PC-3 (cell line): ENCODE measurements at regions of chr10 and their contacts with region 1.

Region 1: GRCh38 chr10:73940634-73941221 is 29.8 kb downstream of the PLAU start:
- DNase-seq: peak; percentile 100
- ATAC-seq: peak; percentile 85
- H3K4me3 ChIP-seq: peak overlapping the region; percentile 38
- H3K27ac ChIP-seq: peak overlapping the region; percentile 74
- H3K4me1 ChIP-seq: peaks cover 31% of the 10 kb centered on the region
- H3K27me3 ChIP-seq: no peaks in the 10 kb centered on the region
- CTCF ChIP-seq: peak; percentile 100

Region 2: DNA sequence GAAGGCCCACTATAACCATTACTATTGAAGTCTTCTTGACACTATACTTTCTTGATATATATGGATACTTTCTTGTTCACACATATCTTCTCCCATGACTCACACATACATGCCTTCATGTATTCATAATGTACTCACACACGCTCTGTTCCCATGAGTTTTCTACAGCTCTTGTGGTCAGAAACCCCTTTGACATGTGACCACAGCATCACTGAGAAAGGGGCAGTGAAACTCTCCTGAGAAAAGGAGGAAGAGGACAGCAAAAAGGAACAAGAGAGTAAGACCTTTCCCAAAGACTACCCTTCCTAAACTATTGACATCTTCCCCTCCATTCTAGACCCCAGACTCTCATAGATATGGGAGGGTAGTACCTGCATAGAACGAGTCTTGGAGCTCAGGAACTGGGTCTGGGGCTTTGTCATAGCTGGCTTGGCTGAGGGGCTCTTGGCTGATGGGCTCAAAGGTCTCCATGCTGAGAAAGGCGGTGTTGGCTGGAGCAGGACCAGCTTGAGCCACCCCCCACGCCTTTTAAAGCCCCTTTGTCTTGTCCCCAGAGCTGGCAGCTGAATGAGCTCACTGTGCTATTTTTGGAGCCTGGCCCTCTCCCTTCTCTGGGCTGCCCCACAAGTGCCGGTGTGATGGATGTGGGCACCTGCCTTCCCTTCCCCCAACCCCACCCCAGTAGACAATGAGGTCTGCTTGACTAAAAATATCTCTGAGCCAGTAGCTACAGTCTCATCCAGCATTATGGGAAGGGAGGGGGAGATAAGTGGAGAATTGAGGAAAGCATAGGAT is 290.0 kb before region 1 on chr10:
- CTCF ChIA-PET with region 1: no interaction called
- POLR2A ChIA-PET with region 1: no interaction called
- intact Hi-C with region 1: loop called (anchors 10 kb)
- DNase-seq: peak; percentile 53
- ATAC-seq: no peak
- H3K4me3 ChIP-seq: no peak overlapping the region
- H3K27ac ChIP-seq: no peak overlapping the region
- H3K4me1 ChIP-seq: no peaks in the 10 kb centered on the region
- H3K27me3 ChIP-seq: no peaks in the 10 kb centered on the region
- CTCF ChIP-seq: no peak

Region 3: GRCh38 chr10:73803680-73804286 is 136.9 kb before region 1 on chr10:
- CTCF ChIA-PET with region 1: no interaction called
- POLR2A ChIA-PET with region 1: no interaction called
- intact Hi-C with region 1: no loop called
- DNase-seq: no peak
- ATAC-seq: no peak
- H3K4me3 ChIP-seq: no peak overlapping the region
- H3K27ac ChIP-seq: no peak overlapping the region
- H3K4me1 ChIP-seq: no peaks in the 10 kb centered on the region
- H3K27me3 ChIP-seq: no peaks in the 10 kb centered on the region
- CTCF ChIP-seq: no peak

Region 4: DNA sequence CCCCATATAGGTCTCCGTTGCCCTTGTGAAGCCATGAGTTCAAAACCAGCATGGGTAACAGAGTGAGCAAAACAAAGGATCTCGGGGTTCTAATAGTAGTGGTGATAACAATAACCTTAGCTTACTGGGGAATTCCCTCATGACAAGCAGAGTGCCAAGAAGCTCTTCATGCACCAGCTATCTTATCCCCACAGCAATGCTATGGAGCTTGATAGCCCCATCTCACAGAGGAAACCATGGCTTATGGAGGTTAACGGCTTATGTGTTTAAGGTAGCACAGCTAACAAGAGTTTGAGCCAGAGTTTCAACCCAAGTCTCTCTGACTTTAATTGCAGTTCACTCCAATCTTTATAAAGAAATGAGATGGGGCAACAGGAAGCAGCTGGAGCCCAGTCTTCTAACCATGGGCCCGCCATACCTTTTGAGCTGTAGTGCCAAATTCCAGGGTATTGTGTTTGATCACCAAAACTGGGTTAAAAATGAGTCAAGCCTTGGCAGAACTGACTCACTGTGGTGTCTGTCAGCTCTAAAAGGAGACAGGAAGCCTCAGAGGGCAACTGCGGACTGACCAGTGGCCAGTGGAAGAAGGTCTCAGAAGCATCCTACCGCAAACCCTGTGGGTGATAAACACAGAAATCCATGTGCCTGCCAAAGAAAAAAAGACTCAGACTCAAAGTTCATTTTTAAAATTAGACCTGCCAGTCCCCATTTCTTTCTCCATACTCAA is 46.3 kb before region 1 on chr10:
- CTCF ChIA-PET with region 1: interaction called, 317 read pairs
- POLR2A ChIA-PET with region 1: interaction called, 10 read pairs
- intact Hi-C with region 1: no loop called
- DNase-seq: peak; percentile 100
- ATAC-seq: peak; percentile 67
- H3K4me3 ChIP-seq: no peak overlapping the region
- H3K27ac ChIP-seq: peak overlapping the region; percentile 60
- H3K4me1 ChIP-seq: peaks cover 76% of the 10 kb centered on the region
- H3K27me3 ChIP-seq: no peaks in the 10 kb centered on the region
- CTCF ChIP-seq: no peak

Region 5: DNA sequence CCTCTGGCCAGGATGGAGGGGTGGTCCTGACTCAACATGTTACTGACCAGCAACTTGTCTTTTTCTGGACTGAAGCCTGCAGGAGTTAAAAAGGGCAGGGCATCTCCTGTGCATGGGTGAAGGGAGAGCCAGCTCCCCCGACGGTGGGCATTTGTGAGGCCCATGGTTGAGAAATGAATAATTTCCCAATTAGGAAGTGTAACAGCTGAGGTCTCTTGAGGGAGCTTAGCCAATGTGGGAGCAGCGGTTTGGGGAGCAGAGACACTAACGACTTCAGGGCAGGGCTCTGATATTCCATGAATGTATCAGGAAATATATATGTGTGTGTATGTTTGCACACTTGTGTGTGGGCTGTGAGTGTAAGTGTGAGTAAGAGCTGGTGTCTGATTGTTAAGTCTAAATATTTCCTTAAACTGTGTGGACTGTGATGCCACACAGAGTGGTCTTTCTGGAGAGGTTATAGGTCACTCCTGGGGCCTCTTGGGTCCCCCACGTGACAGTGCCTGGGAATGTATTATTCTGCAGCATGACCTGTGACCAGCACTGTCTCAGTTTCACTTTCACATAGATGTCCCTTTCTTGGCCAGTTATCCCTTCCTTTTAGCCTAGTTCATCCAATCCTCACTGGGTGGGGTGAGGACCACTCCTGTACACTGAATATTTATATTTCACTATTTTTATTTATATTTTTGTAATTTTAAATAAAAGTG is 23.8 kb before region 1 on chr10:
- CTCF ChIA-PET with region 1: interaction called, 10 read pairs
- POLR2A ChIA-PET with region 1: interaction called, 3 read pairs
- intact Hi-C with region 1: no loop called
- DNase-seq: peak; percentile 50
- ATAC-seq: peak; percentile 5
- H3K4me3 ChIP-seq: peak overlapping the region; percentile 0; the same call in 1 of the 2 replicates
- H3K27ac ChIP-seq: peak overlapping the region; percentile 7
- H3K4me1 ChIP-seq: peaks cover 58% of the 10 kb centered on the region
- H3K27me3 ChIP-seq: no peaks in the 10 kb centered on the region
- CTCF ChIP-seq: no peak

Region 6: GRCh38 chr10:74035303-74035702 is 94.6 kb after region 1 on chr10:
- CTCF ChIA-PET with region 1: interaction called, 13 read pairs
- POLR2A ChIA-PET with region 1: no interaction called
- intact Hi-C with region 1: loop called (anchors 1 kb)
- DNase-seq: peak; percentile 76
- ATAC-seq: peak; percentile 51
- H3K4me3 ChIP-seq: no peak overlapping the region
- H3K27ac ChIP-seq: no peak overlapping the region
- H3K4me1 ChIP-seq: no peaks in the 10 kb centered on the region
- H3K27me3 ChIP-seq: no peaks in the 10 kb centered on the region
- CTCF ChIP-seq: peak; percentile 98

Region 7: DNA sequence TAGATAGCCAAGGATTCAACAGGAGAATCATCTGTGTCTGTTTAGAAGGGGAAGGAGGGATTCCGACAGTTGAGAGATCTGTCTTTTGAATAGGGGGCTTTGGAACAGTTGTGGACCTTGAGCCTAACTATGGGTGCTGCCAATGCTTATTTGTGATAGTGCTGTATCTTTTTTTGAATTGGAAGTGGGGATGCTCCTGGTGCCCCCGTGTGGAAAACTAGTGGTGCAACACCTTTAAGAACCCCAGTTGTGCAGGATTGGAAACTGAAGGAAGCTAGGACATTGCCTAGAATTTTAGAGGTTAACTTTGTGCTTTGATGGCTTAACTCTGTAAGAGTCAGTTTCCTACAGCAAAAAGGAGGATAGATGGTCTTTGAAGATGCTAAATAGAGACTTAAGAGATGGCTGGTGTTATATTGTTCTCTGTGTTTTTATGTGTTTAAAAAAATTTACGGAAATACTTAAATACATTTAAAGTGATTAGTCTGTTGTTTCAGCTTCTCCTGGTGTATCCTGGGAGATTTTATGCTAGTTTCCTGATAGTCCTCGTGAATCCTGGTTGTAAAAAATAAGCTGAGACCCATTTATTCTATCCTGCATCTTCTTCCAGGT is 140.6 kb after region 1 on chr10:
- CTCF ChIA-PET with region 1: interaction called, 13 read pairs
- POLR2A ChIA-PET with region 1: interaction called, 3 read pairs
- intact Hi-C with region 1: loop called (anchors 1 kb)
- DNase-seq: peak; percentile 94
- ATAC-seq: peak; percentile 49
- H3K4me3 ChIP-seq: no peak overlapping the region
- H3K27ac ChIP-seq: no peak overlapping the region
- H3K4me1 ChIP-seq: peaks cover 43% of the 10 kb centered on the region
- H3K27me3 ChIP-seq: no peaks in the 10 kb centered on the region
- CTCF ChIP-seq: no peak

Region 8: GRCh38 chr10:74406006-74406405 is 465.3 kb after region 1 on chr10:
- CTCF ChIA-PET with region 1: no interaction called
- POLR2A ChIA-PET with region 1: no interaction called
- intact Hi-C with region 1: no loop called
- DNase-seq: no peak
- ATAC-seq: peak; percentile 22; the same call in 1 of the 2 replicates
- H3K4me3 ChIP-seq: no peak overlapping the region
- H3K27ac ChIP-seq: no peak overlapping the region
- H3K4me1 ChIP-seq: peaks cover 6% of the 10 kb centered on the region; the same call in 1 of the 2 replicates
- H3K27me3 ChIP-seq: no peaks in the 10 kb centered on the region
- CTCF ChIP-seq: no peak

Region 9: DNA sequence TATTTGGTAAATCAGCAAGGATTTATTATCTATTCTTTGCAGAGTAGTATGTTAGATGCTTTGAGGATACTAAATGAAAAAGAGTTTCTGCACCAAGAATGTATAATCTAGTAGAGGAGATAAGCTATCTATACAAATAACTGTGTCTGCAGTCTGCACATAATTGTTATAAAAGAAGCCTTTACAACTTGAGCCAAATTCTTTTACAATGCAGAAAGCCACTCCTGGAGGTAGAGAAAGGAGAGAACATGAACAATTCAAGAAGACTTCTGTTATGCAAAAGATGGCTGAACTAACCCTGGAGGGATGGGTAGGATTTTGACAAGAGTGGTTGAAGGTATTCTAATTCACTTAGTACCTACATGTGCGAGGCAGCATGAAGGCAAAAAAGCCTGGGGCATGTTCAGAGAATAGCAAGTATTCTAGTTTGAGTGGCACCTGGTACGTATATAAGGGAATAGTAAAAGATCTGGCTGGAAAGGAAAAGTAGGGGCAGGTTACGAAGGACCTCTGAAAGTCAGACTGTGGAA is 634.5 kb after region 1 on chr10:
- CTCF ChIA-PET with region 1: no interaction called
- POLR2A ChIA-PET with region 1: no interaction called
- intact Hi-C with region 1: no loop called
- DNase-seq: no peak
- ATAC-seq: no peak
- H3K4me3 ChIP-seq: no peak overlapping the region
- H3K27ac ChIP-seq: no peak overlapping the region
- H3K4me1 ChIP-seq: no peaks in the 10 kb centered on the region
- H3K27me3 ChIP-seq: no peaks in the 10 kb centered on the region
- CTCF ChIP-seq: no peak